GM12878 (cell line): ENCODE measurements at regions of chr7 and their contacts with region 1.

Region 1: DNA sequence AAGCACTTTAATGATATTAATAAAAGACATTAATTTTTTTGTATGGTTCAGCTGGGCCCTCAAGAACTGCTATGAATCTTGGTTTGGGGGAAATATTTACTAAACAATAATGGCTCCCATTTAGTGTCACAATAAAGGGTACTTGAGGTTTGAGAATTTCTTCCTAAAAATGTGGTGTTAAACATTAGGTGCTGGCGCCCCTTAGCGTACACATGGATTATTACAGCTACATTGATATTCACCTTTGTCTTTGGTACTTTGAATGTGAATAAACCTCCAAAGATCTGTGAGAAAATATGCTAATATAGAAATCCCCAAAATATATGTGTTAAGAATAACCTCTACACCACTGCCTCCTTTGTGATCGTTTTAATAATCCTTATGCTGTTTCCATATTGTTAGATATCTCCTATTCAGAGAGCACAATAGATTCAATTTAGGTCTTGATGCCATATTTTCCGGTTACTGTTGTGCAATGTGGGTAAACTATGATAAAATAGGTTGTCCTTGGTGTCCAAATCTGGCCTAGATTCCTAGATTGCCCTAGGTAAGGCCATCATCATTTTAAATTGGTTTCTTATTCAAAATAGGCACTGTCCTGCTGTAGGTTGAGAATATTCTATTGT is 161.8 kb upstream of the CACNA2D1 start:
- DNase-seq: no peak
- ATAC-seq: peak; percentile 59; the same call in 2 of the 3 replicates
- H3K4me3 ChIP-seq: no peak overlapping the region
- H3K27ac ChIP-seq: no peak overlapping the region
- H3K4me1 ChIP-seq: no peaks in the 10 kb centered on the region
- H3K27me3 ChIP-seq: no peaks in the 10 kb centered on the region
- CTCF ChIP-seq: peak; percentile 52 to 70 (median 67)
- EP300 ChIP-seq: no peak
- POLR2A ChIP-seq: no peak
- RAD21 ChIP-seq: peak; percentile 73

Region 2: DNA sequence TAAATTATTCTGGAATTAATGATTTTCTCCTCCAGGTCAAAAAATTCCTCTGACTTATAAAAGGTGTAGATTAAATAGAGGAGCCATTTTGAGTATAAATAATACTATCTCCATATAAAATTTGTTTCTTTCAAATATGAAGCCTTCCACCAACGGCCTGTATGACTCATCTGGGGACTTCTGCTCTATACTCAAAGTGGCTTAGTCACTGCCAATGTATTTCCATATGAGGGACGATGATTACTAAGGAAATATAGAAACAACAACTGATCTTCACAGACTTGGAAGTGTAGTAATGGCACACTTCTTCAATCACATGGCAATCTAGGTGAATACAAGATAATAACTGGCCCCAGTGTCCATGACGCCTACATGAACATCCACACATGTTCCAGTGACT is 499.9 kb before region 1 on chr7:
- CTCF ChIA-PET with region 1: interaction called, 3 read pairs
- POLR2A ChIA-PET with region 1: no interaction called
- RAD21 ChIA-PET with region 1: no interaction called
- SMC1A ChIA-PET with region 1: interaction called, 10 read pairs
- in situ Hi-C with region 1: no loop called
- intact Hi-C with region 1: no loop called
- DNase-seq: no peak
- ATAC-seq: peak; percentile 66
- H3K4me3 ChIP-seq: no peak overlapping the region
- H3K27ac ChIP-seq: no peak overlapping the region
- H3K4me1 ChIP-seq: no peaks in the 10 kb centered on the region
- H3K27me3 ChIP-seq: no peaks in the 10 kb centered on the region
- CTCF ChIP-seq: no peak
- EP300 ChIP-seq: no peak
- POLR2A ChIP-seq: no peak
- RAD21 ChIP-seq: no peak

Region 3: GRCh38 chr7:82410461-82410860 is 194.9 kb before region 1 on chr7:
- CTCF ChIA-PET with region 1: no interaction called
- POLR2A ChIA-PET with region 1: no interaction called
- RAD21 ChIA-PET with region 1: no interaction called
- SMC1A ChIA-PET with region 1: no interaction called
- in situ Hi-C with region 1: no loop called
- intact Hi-C with region 1: no loop called
- DNase-seq: no peak
- ATAC-seq: peak; percentile 5; the same call in 1 of the 3 replicates
- H3K4me3 ChIP-seq: no peak overlapping the region
- H3K27ac ChIP-seq: no peak overlapping the region
- H3K4me1 ChIP-seq: no peaks in the 10 kb centered on the region
- H3K27me3 ChIP-seq: no peaks in the 10 kb centered on the region
- CTCF ChIP-seq: no peak
- EP300 ChIP-seq: no peak
- POLR2A ChIP-seq: no peak
- RAD21 ChIP-seq: no peak

Region 4: DNA sequence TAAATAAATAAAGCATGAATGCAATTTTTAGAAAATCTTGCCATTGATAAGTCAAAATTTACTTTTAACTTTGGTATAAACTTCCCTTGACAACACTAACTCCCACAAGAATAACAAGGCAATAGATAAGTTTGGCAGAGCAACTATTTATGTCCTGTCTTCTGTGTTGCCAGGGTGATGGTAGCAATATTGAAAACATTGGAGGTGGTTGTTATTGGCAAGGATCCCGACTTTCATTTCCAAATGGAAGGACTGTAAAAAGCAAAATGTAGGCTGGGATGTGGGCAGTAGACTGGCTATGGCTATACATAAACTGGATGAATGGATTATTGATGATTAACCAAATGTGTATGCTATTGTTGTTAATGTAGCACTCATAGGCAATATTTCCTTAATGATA is 26.9 kb before region 1 on chr7:
- CTCF ChIA-PET with region 1: interaction called, 14 read pairs
- POLR2A ChIA-PET with region 1: no interaction called
- RAD21 ChIA-PET with region 1: no interaction called
- SMC1A ChIA-PET with region 1: interaction called, 5 read pairs
- in situ Hi-C with region 1: no loop called
- intact Hi-C with region 1: no loop called
- DNase-seq: no peak
- ATAC-seq: no peak
- H3K4me3 ChIP-seq: no peak overlapping the region
- H3K27ac ChIP-seq: no peak overlapping the region
- H3K4me1 ChIP-seq: no peaks in the 10 kb centered on the region
- H3K27me3 ChIP-seq: no peaks in the 10 kb centered on the region
- CTCF ChIP-seq: no peak
- EP300 ChIP-seq: no peak
- POLR2A ChIP-seq: no peak
- RAD21 ChIP-seq: no peak

Region 5: DNA sequence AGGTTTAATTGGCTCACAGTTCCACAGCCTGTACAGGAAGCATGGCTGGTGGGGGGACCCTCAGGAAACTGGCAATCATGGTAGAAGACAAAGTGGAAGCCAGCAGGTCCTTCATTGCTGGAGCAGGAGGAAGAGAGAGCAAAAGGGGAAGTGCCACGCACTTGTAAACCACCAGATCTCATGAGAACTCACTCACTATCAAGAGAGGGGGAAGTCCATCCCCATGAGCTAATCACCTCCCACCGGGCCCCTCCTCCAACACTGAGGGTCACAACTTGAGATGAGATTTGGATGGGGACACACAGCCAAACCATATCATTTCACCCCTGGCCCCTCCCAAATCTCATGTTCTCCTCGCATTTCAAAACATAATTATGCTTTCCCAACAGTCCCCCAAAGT is 10.2 kb after region 1 on chr7:
- CTCF ChIA-PET with region 1: interaction called, 28 read pairs
- POLR2A ChIA-PET with region 1: interaction called, 4 read pairs
- RAD21 ChIA-PET with region 1: interaction called, 8 read pairs
- SMC1A ChIA-PET with region 1: interaction called, 11 read pairs
- in situ Hi-C with region 1: no loop called
- intact Hi-C with region 1: no loop called
- DNase-seq: no peak
- ATAC-seq: peak; percentile 97
- H3K4me3 ChIP-seq: no peak overlapping the region
- H3K27ac ChIP-seq: no peak overlapping the region
- H3K4me1 ChIP-seq: no peaks in the 10 kb centered on the region
- H3K27me3 ChIP-seq: no peaks in the 10 kb centered on the region
- CTCF ChIP-seq: no peak
- EP300 ChIP-seq: no peak
- POLR2A ChIP-seq: no peak
- RAD21 ChIP-seq: no peak

Region 6: GRCh38 chr7:82729172-82730030 is 124.0 kb after region 1 on chr7:
- CTCF ChIA-PET with region 1: interaction called, 33 read pairs
- POLR2A ChIA-PET with region 1: no interaction called
- RAD21 ChIA-PET with region 1: interaction called, 12 read pairs
- SMC1A ChIA-PET with region 1: interaction called, 23 read pairs
- in situ Hi-C with region 1: loop called (anchors 10 kb)
- intact Hi-C with region 1: loop called (anchors 2 kb)
- DNase-seq: no peak
- ATAC-seq: peak; percentile 56; the same call in 2 of the 3 replicates
- H3K4me3 ChIP-seq: no peak overlapping the region
- H3K27ac ChIP-seq: no peak overlapping the region
- H3K4me1 ChIP-seq: no peaks in the 10 kb centered on the region
- H3K27me3 ChIP-seq: no peaks in the 10 kb centered on the region
- CTCF ChIP-seq: peak; percentile 55 to 72 (median 56)
- EP300 ChIP-seq: no peak
- POLR2A ChIP-seq: no peak
- RAD21 ChIP-seq: peak; percentile 80

Region 7: DNA sequence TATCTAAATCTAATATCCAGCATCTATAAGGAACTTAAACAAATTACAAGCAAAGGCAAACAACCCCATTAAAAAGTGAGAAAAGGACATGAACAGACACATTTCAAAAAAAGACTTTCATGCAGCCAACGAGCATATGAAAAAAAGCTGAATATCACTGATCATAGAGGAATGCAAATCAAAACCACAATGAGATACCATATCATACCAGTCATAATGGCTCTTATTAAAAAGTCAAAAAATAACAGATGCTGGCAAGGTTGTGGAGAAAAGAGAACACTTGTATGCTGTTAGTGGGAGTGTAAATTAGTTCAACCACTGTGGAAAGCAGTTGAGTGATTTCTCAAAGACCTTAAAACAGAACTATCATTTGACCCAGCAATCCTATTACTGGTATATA is 172.7 kb after region 1 on chr7:
- CTCF ChIA-PET with region 1: no interaction called
- POLR2A ChIA-PET with region 1: no interaction called
- RAD21 ChIA-PET with region 1: no interaction called
- SMC1A ChIA-PET with region 1: no interaction called
- in situ Hi-C with region 1: no loop called
- intact Hi-C with region 1: no loop called
- DNase-seq: no peak
- ATAC-seq: no peak
- H3K4me3 ChIP-seq: no peak overlapping the region
- H3K27ac ChIP-seq: no peak overlapping the region
- H3K4me1 ChIP-seq: no peaks in the 10 kb centered on the region
- H3K27me3 ChIP-seq: no peaks in the 10 kb centered on the region
- CTCF ChIP-seq: no peak
- EP300 ChIP-seq: no peak
- POLR2A ChIP-seq: no peak
- RAD21 ChIP-seq: no peak